Calu3 (cell line): ENCODE measurements at regions of chr6 and their contacts with region 1.

Region 1: GRCh38 chr6:84645000-84645399 is 119.4 kb downstream of the TBX18 start:
- DNase-seq: no peak
- H3K4me3 Mint-ChIP-seq: peak overlapping the region; percentile 43
- H3K27ac Mint-ChIP-seq: peak overlapping the region; percentile 96
- H3K4me1 Mint-ChIP-seq: peaks cover 64% of the 10 kb centered on the region
- H3K27me3 Mint-ChIP-seq: no peaks in the 10 kb centered on the region
- CTCF ChIP-seq: no peak

Region 2: DNA sequence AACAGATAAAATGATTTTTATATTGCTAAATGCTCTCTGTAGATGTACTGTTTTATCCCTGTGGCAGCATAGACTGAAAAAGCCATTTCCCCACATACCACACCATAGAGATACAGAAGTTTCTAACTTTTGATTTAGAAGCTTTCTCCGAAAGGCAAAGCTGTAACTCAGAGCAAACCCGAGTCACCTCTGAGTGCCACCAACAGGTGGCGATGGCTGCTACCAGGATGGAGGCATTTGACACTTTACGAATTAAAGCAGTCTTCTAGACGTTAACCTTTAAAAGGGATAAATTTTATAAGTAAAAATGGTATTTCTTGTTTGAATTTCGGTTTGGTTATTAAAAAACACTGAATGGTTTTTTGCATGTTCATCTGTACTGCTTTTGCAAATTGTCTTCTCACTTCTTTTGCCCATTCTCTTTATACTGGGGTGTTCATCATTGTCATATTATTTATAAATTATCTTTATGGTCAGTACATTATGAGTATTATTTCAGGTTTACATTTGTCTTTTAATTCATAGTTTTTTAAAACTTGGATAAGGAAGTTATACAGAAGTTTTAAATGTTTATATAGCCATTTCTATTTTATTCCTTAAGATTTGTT is 216.6 kb before region 1 on chr6:
- CTCF ChIA-PET with region 1: no interaction called
- intact Hi-C with region 1: loop called (anchors 5 kb)
- DNase-seq: peak; percentile 71
- H3K4me3 Mint-ChIP-seq: no peak overlapping the region
- H3K27ac Mint-ChIP-seq: no peak overlapping the region
- H3K4me1 Mint-ChIP-seq: peaks cover 9% of the 10 kb centered on the region
- H3K27me3 Mint-ChIP-seq: no peaks in the 10 kb centered on the region
- CTCF ChIP-seq: peak; percentile 78

Region 3: GRCh38 chr6:84466511-84466910 is 178.5 kb before region 1 on chr6:
- CTCF ChIA-PET with region 1: interaction called, 6 read pairs
- intact Hi-C with region 1: loop called (anchors 5 kb)
- DNase-seq: peak; percentile 82
- H3K4me3 Mint-ChIP-seq: no peak overlapping the region
- H3K27ac Mint-ChIP-seq: peak overlapping the region; percentile 75
- H3K4me1 Mint-ChIP-seq: peaks cover 48% of the 10 kb centered on the region
- H3K27me3 Mint-ChIP-seq: no peaks in the 10 kb centered on the region
- CTCF ChIP-seq: no peak

Region 4: DNA sequence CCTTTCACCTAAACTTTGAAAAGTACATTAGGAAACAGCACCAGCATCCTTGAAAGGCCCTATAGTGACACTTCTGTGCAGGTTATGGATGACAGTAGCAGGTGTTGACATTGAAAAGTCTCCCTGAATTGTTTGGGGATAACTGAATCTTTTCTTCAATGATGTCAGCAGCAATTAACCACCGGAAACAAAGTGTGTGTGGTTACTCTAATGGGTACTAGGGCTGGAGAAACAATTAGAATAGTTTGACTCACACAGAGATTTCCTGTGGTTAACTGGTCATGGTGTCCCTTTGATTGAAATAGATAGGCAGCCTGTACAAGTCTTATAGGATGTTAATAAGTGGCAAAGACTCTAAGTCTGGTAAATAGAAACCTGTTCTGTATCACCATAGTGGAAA is 69.7 kb before region 1 on chr6:
- CTCF ChIA-PET with region 1: no interaction called
- intact Hi-C with region 1: loop called (anchors 5 kb)
- DNase-seq: no peak
- H3K4me3 Mint-ChIP-seq: no peak overlapping the region
- H3K27ac Mint-ChIP-seq: no peak overlapping the region
- H3K4me1 Mint-ChIP-seq: no peaks in the 10 kb centered on the region
- H3K27me3 Mint-ChIP-seq: no peaks in the 10 kb centered on the region
- CTCF ChIP-seq: no peak

Region 5: DNA sequence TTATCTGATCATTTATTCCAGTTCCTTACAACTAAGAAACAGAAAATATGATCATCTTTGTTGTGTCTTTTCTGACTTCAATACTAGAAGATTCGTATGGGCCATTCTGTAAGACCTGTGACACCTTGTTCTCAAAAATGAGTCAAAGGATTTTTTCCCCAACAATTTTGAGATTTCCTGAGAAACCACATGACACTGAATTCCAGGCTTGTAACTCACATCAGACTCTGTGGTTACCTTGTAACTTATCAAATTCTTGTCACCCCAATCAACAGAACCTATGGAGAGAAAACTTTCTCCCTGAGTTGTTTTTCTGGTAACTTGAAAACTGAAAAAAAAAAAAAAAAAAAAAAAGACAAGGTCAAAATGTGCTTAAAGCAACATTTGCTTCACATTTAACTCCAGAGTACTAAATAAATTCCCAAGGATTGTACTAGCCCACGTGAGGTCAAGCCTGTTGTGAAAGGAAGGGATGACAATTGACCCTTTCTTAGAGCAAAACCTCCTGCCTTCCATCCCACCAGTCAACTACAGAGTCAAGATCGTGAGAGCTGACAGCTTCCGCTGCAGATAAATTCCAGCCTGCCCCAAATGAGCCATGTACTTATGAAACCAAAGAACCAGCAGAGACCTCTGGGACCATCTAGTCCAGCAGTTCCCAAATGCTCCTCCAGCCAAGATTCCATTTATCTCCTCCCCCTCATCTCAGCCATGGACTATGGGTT is 20.9 kb before region 1 on chr6:
- CTCF ChIA-PET with region 1: interaction called, 10 read pairs
- intact Hi-C with region 1: loop called (anchors 1 kb)
- DNase-seq: no peak
- H3K4me3 Mint-ChIP-seq: no peak overlapping the region
- H3K27ac Mint-ChIP-seq: peak overlapping the region; percentile 16
- H3K4me1 Mint-ChIP-seq: peaks cover 21% of the 10 kb centered on the region
- H3K27me3 Mint-ChIP-seq: no peaks in the 10 kb centered on the region
- CTCF ChIP-seq: no peak

Region 6: GRCh38 chr6:84696166-84696565 is 51.2 kb after region 1 on chr6:
- CTCF ChIA-PET with region 1: no interaction called
- intact Hi-C with region 1: no loop called
- DNase-seq: no peak
- H3K4me3 Mint-ChIP-seq: no peak overlapping the region
- H3K27ac Mint-ChIP-seq: no peak overlapping the region
- H3K4me1 Mint-ChIP-seq: peaks cover 6% of the 10 kb centered on the region
- H3K27me3 Mint-ChIP-seq: no peaks in the 10 kb centered on the region
- CTCF ChIP-seq: no peak

Region 7: DNA sequence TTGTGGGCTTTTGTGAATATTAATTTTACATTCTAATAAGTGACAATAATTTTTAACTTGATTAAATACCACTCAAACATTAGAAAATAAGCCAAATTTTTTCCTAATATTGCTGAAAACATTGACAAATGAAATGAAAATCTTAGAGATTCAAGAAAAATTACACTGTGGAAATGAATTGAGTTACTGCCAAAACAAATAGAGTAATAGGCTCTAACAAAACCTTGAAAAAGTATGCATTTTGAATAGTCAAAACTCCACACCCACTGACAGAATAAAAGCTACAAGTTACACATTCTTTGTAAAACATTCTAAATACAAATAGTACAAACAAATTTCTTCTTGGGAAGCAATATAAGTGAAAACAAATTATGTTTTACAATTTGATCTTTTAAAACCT is 113.5 kb after region 1 on chr6:
- CTCF ChIA-PET with region 1: no interaction called
- intact Hi-C with region 1: loop called (anchors 2 kb)
- DNase-seq: no peak
- H3K4me3 Mint-ChIP-seq: no peak overlapping the region
- H3K27ac Mint-ChIP-seq: peak overlapping the region; percentile 50
- H3K4me1 Mint-ChIP-seq: peaks cover 14% of the 10 kb centered on the region
- H3K27me3 Mint-ChIP-seq: no peaks in the 10 kb centered on the region
- CTCF ChIP-seq: no peak